ENCODE measurements at regions of chr12 and their contacts with region 1.

Region 1: GRCh38 chr12:115752913-115753726 is 524.4 kb downstream of the MED13L start:
- DNase-seq: peak; percentile 57 to 79 (median 66)
- H3K4me3 ChIP-seq: no peak overlapping the region
- H3K27ac ChIP-seq: peak overlapping the region in 1 of 5 donors; percentile 11
- H3K4me1 ChIP-seq: peaks cover 6 to 16% of the 10 kb centered on the region in 2 donors
- H3K27me3 ChIP-seq: no peaks in the 10 kb centered on the region
- CTCF ChIP-seq: peak; percentile 47 to 84 (median 74)
- POLR2A ChIP-seq: no peak

Region 2: GRCh38 chr12:114625294-114625851 is 1127.7 kb before region 1 on chr12:
- intact Hi-C with region 1: loop called in 1 of 2 experiments (anchors 10 kb)
- DNase-seq: peak; percentile 54 to 76 (median 64)
- H3K4me3 ChIP-seq: no peak overlapping the region
- H3K27ac ChIP-seq: no peak overlapping the region
- H3K4me1 ChIP-seq: no peaks in the 10 kb centered on the region
- H3K27me3 ChIP-seq: no peaks in the 10 kb centered on the region
- CTCF ChIP-seq: peak; percentile 68 to 84 (median 79)
- POLR2A ChIP-seq: no peak

Region 3: GRCh38 chr12:116257215-116257614 is 504.1 kb after region 1 on chr12:
- intact Hi-C with region 1: no loop called
- DNase-seq: no peak
- H3K4me3 ChIP-seq: no peak overlapping the region
- H3K27ac ChIP-seq: peak overlapping the region in 3 of 5 donors; percentile 35 to 60 (median 42)
- H3K4me1 ChIP-seq: peaks cover 20 to 50% of the 10 kb centered on the region in 2 donors
- H3K27me3 ChIP-seq: no peaks in the 10 kb centered on the region
- CTCF ChIP-seq: no peak
- POLR2A ChIP-seq: no peak

Measured in adrenal gland (tissue), 19 donors.